ENCODE measurements at regions of chr10 and their contacts with region 1.

Region 1: GRCh38 chr10:102009801-102010425 is 46.1 kb downstream of the ARMH3 start:
- DNase-seq: peak; percentile 40
- H3K4me3 Mint-ChIP-seq: no peak overlapping the region
- H3K27ac Mint-ChIP-seq: no peak overlapping the region
- H3K4me1 Mint-ChIP-seq: no peaks in the 10 kb centered on the region
- H3K27me3 Mint-ChIP-seq: no peaks in the 10 kb centered on the region

Region 2: GRCh38 chr10:101495324-101495925 is 514.5 kb before region 1 on chr10:
- CTCF ChIA-PET with region 1: no interaction called
- POLR2A ChIA-PET with region 1: no interaction called
- intact Hi-C with region 1: no loop called
- DNase-seq: no peak
- H3K4me3 Mint-ChIP-seq: no peak overlapping the region
- H3K27ac Mint-ChIP-seq: no peak overlapping the region
- H3K4me1 Mint-ChIP-seq: no peaks in the 10 kb centered on the region
- H3K27me3 Mint-ChIP-seq: no peaks in the 10 kb centered on the region

Region 3: GRCh38 chr10:101889256-101890210 is 120.4 kb before region 1 on chr10:
- CTCF ChIA-PET with region 1: interaction called, 69 read pairs
- POLR2A ChIA-PET with region 1: no interaction called
- intact Hi-C with region 1: loop called (anchors 1 kb)
- DNase-seq: peak; percentile 83
- H3K4me3 Mint-ChIP-seq: no peak overlapping the region
- H3K27ac Mint-ChIP-seq: no peak overlapping the region
- H3K4me1 Mint-ChIP-seq: no peaks in the 10 kb centered on the region
- H3K27me3 Mint-ChIP-seq: no peaks in the 10 kb centered on the region

Region 4: GRCh38 chr10:101986625-101986973 is 23.3 kb before region 1 on chr10:
- CTCF ChIA-PET with region 1: no interaction called
- POLR2A ChIA-PET with region 1: no interaction called
- intact Hi-C with region 1: no loop called
- DNase-seq: no peak
- H3K4me3 Mint-ChIP-seq: no peak overlapping the region
- H3K27ac Mint-ChIP-seq: no peak overlapping the region
- H3K4me1 Mint-ChIP-seq: no peaks in the 10 kb centered on the region
- H3K27me3 Mint-ChIP-seq: no peaks in the 10 kb centered on the region

Region 5: GRCh38 chr10:102024799-102025198 is 14.9 kb after region 1 on chr10:
- CTCF ChIA-PET with region 1: interaction called, 17 read pairs
- POLR2A ChIA-PET with region 1: no interaction called
- intact Hi-C with region 1: no loop called
- DNase-seq: no peak
- H3K4me3 Mint-ChIP-seq: no peak overlapping the region
- H3K27ac Mint-ChIP-seq: no peak overlapping the region
- H3K4me1 Mint-ChIP-seq: peaks cover 2% of the 10 kb centered on the region
- H3K27me3 Mint-ChIP-seq: no peaks in the 10 kb centered on the region

Region 6: GRCh38 chr10:102064868-102065560 is 55.1 kb after region 1 on chr10 and contains the start of gene HPS6:
- CTCF ChIA-PET with region 1: interaction called, 14 read pairs
- POLR2A ChIA-PET with region 1: no interaction called
- intact Hi-C with region 1: loop called (anchors 10 kb)
- DNase-seq: peak; percentile 93
- H3K4me3 Mint-ChIP-seq: peak within 1 kb of the TSS; percentile 86
- H3K27ac Mint-ChIP-seq: peak within 1 kb of the TSS; percentile 81
- H3K4me1 Mint-ChIP-seq: peaks cover 26% of the 10 kb centered on the region
- H3K27me3 Mint-ChIP-seq: no peaks in the 10 kb centered on the region
- total RNA-seq, gene HPS6: 22.3 TPM

Region 7: DNA sequence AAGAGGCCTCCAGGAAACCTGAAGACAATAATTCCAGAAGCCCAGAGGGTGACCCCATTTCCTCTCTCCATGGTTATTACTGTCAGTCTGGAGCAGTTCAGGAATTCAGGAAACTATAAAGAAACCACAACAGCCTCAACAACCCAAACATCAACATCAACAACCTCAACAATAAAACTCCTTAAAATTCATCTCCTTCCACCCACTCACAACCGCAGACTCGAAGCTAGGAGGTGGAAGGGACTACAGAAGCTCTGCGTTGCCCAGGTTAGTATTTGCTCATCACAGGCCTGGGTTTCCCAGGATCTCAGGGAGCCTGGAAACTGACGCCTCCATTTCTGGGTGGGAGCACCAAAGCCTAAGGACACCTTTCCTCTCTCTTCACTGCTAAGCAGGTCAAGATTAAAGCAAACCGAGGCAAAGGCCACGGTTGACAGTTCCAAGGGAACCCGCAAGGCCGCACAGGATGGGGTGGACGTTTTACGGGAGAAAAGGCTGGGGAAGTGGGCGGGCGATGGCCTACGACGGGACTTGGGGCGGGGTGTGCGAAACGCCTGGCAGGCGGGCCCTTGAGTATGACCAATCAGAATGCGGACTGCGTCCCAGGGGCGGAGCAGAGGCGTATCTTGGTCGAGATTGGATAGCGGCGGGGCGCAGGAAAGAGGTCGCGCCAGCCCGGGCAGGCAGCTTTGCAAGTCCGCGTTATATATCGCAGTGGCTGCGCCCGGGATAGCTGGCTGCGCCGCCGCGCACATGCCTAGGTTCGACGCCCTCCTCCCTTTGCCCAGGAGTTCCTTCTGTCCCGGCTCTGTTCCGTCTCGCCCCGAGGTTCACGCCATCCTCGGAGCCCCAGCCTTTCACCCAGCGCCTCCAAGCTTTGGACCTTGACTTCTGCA is 216.0 kb after region 1 on chr10 and contains the start of gene ELOVL3:
- CTCF ChIA-PET with region 1: no interaction called
- POLR2A ChIA-PET with region 1: no interaction called
- intact Hi-C with region 1: no loop called
- DNase-seq: peak; percentile 94
- H3K4me3 Mint-ChIP-seq: peak within 1 kb of the TSS; percentile 47
- H3K27ac Mint-ChIP-seq: no peak within 1 kb of the TSS
- H3K4me1 Mint-ChIP-seq: peaks cover 13% of the 10 kb centered on the region
- H3K27me3 Mint-ChIP-seq: peaks cover 40% of the 10 kb centered on the region
- total RNA-seq, gene ELOVL3: 0.21 to 0.56 TPM

Measured in activated CD4-positive, alpha-beta memory T cell treated with anti-CD3 and anti-CD28 coated beads for 36 hours (primary cell).